Mammary epithelial cell (primary cell): ENCODE measurements at regions of chr20 and their contacts with region 1.

Region 1: DNA sequence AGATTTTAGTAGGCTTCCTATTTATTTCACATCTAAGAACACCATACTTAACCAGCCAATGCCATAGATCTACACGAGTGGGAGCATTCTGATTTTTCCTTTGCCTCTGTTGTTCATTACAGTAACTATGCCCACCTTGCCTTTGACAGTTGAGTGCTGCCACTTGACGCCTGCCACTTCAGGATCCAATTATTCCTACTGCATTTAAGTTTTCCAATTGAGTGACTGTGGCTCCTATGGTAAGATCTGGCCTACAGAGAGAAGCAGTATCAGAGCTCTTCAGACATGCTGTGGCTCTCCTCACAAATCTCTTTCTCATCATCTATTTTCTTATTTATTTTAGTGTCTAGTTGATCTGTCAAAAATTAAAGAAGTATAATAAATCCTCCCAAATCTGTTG is 403.0 kb upstream of the SPTLC3 start:
- DNase-seq: no peak
- H3K4me3 ChIP-seq: no peak overlapping the region
- H3K27ac ChIP-seq: no peak overlapping the region
- H3K4me1 ChIP-seq: no peaks in the 10 kb centered on the region
- H3K27me3 ChIP-seq: no peaks in the 10 kb centered on the region
- CTCF ChIP-seq: no peak

Region 2: GRCh38 chr20:12294678-12295077 is 311.1 kb before region 1 on chr20:
- CTCF ChIA-PET with region 1: interaction called, 13 read pairs
- dilution Hi-C with region 1: no loop called
- in situ Hi-C with region 1: no loop called
- intact Hi-C with region 1: no loop called
- DNase-seq: no peak
- H3K4me3 ChIP-seq: no peak overlapping the region
- H3K27ac ChIP-seq: no peak overlapping the region
- H3K4me1 ChIP-seq: no peaks in the 10 kb centered on the region
- H3K27me3 ChIP-seq: no peaks in the 10 kb centered on the region
- CTCF ChIP-seq: no peak